ENCODE measurements at regions of chr1 and their contacts with region 1.

Region 1: GRCh38 chr1:111025109-111025508 is 61.4 kb upstream of the LRIF1 start:
- DNase-seq: no peak
- H3K4me3 ChIP-seq: no peak overlapping the region
- H3K27ac ChIP-seq: no peak overlapping the region
- H3K4me1 ChIP-seq: no peaks in the 10 kb centered on the region
- H3K27me3 ChIP-seq: no peaks in the 10 kb centered on the region
- CTCF ChIP-seq: no peak
- POLR2A ChIP-seq: no peak

Region 2: GRCh38 chr1:111008046-111008445 is 17.1 kb before region 1 on chr1:
- intact Hi-C with region 1: no loop called
- DNase-seq: no peak
- H3K4me3 ChIP-seq: no peak overlapping the region
- H3K27ac ChIP-seq: no peak overlapping the region
- H3K4me1 ChIP-seq: no peaks in the 10 kb centered on the region
- H3K27me3 ChIP-seq: no peaks in the 10 kb centered on the region
- CTCF ChIP-seq: no peak
- POLR2A ChIP-seq: no peak

Region 3: GRCh38 chr1:111052246-111052645 is 27.1 kb after region 1 on chr1:
- intact Hi-C with region 1: no loop called
- DNase-seq: no peak
- H3K4me3 ChIP-seq: no peak overlapping the region
- H3K27ac ChIP-seq: no peak overlapping the region
- H3K4me1 ChIP-seq: no peaks in the 10 kb centered on the region
- H3K27me3 ChIP-seq: no peaks in the 10 kb centered on the region
- CTCF ChIP-seq: no peak
- POLR2A ChIP-seq: no peak

Region 4: DNA sequence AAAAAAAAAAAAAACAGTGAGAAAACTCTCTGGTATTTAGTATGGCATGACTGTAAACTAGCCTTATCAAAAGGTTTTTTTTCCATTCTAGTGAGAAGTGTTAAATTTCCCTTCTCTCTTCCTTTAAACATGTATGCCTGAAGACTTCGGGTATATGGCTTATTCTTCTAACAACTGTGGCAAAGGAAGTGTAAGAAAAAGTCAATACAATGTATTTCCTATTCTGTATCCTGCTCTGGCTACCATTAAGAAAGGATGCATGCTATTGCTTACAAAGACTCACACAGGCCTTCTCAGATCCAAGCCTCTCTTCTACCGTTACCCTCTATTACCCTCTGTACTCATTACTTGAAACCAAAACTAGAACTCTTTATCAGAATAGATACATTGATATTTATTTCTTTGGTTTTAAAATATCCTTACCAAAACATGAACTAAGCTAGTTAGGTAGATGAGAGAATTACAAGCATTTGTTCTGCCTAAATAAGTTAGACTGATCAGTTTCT is 123.3 kb after region 1 on chr1:
- intact Hi-C with region 1: loop called (anchors 5 kb)
- DNase-seq: no peak
- H3K4me3 ChIP-seq: no peak overlapping the region
- H3K27ac ChIP-seq: no peak overlapping the region
- H3K4me1 ChIP-seq: no peaks in the 10 kb centered on the region
- H3K27me3 ChIP-seq: no peaks in the 10 kb centered on the region
- CTCF ChIP-seq: no peak
- POLR2A ChIP-seq: no peak

Measured in breast epithelium (tissue), 4 donors.